Caco-2 (cell line): ENCODE measurements at regions of chr13 and their contacts with region 1.

Region 1: GRCh38 chr13:108508263-108508662 is 121.1 kb upstream of the MYO16 start:
- DNase-seq: peak in 1 of 2 experiments; percentile 16
- H3K4me3 ChIP-seq: no peak overlapping the region
- H3K4me3 Mint-ChIP-seq: no peak overlapping the region
- H3K27ac Mint-ChIP-seq: no peak overlapping the region
- H3K4me1 ChIP-seq: no peaks in the 10 kb centered on the region
- H3K4me1 Mint-ChIP-seq: no peaks in the 10 kb centered on the region
- H3K27me3 ChIP-seq: no peaks in the 10 kb centered on the region
- H3K27me3 Mint-ChIP-seq: no peaks in the 10 kb centered on the region
- CTCF ChIP-seq: peak; percentile 27 to 50

Region 2: DNA sequence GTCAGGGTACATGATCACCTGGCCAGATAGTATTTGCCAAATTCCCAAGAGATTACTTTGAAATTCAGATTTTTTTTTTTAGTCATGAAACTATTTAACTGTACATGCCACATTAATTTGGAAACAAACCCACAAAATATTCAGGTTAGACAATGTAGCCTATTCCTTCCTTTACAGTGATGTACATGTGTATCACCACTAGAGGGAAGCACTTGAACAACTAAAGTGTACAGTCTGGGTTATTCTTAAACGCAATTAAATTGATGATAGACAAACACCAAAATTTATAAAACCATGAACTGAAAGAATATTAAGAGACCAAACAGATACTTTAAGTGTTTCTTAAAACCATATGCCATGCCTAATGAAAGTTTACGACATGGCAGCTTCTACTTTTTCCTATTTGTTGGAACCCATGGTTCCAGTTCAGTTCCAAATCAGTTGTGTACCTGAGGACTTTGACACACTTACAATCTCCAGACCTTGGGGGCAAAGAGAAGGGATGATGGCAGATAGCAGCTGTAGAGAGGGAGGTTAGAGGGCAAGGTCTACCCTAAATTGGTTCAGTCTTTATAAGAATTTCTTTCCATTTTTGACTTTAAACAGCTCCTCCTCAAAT is 185.9 kb before region 1 on chr13:
- CTCF ChIA-PET with region 1: no interaction called
- POLR2A ChIA-PET with region 1: no interaction called
- intact Hi-C with region 1: loop called (anchors 5 kb)
- DNase-seq: peak in 1 of 2 experiments; percentile 40
- H3K4me3 ChIP-seq: no peak overlapping the region
- H3K4me3 Mint-ChIP-seq: no peak overlapping the region
- H3K27ac Mint-ChIP-seq: no peak overlapping the region
- H3K4me1 ChIP-seq: no peaks in the 10 kb centered on the region
- H3K4me1 Mint-ChIP-seq: no peaks in the 10 kb centered on the region
- H3K27me3 ChIP-seq: no peaks in the 10 kb centered on the region
- H3K27me3 Mint-ChIP-seq: peaks cover 7% of the 10 kb centered on the region
- CTCF ChIP-seq: peak; percentile 75 to 84

Region 3: GRCh38 chr13:108342369-108343289 is 165.6 kb before region 1 on chr13:
- CTCF ChIA-PET with region 1: no interaction called
- POLR2A ChIA-PET with region 1: no interaction called
- intact Hi-C with region 1: loop called (anchors 5 kb)
- DNase-seq: no peak
- H3K4me3 ChIP-seq: no peak overlapping the region
- H3K4me3 Mint-ChIP-seq: no peak overlapping the region
- H3K27ac Mint-ChIP-seq: no peak overlapping the region
- H3K4me1 ChIP-seq: no peaks in the 10 kb centered on the region
- H3K4me1 Mint-ChIP-seq: peaks cover 5% of the 10 kb centered on the region
- H3K27me3 ChIP-seq: no peaks in the 10 kb centered on the region
- H3K27me3 Mint-ChIP-seq: peaks cover 7% of the 10 kb centered on the region
- CTCF ChIP-seq: peak; percentile 56 to 60